Activated CD4-positive, alpha-beta memory T cell treated with anti-CD3 and anti-CD28 coated beads for 36 hours (primary cell): ENCODE measurements at regions of chr5 and their contacts with region 1.

Region 1: GRCh38 chr5:6827526-6828219 is 114.4 kb downstream of the TENT4A start:
- DNase-seq: peak; percentile 68
- H3K4me3 Mint-ChIP-seq: peak overlapping the region; percentile 50
- H3K27ac Mint-ChIP-seq: peak overlapping the region; percentile 55
- H3K4me1 Mint-ChIP-seq: peaks cover 52% of the 10 kb centered on the region
- H3K27me3 Mint-ChIP-seq: peaks cover 15% of the 10 kb centered on the region

Region 2: DNA sequence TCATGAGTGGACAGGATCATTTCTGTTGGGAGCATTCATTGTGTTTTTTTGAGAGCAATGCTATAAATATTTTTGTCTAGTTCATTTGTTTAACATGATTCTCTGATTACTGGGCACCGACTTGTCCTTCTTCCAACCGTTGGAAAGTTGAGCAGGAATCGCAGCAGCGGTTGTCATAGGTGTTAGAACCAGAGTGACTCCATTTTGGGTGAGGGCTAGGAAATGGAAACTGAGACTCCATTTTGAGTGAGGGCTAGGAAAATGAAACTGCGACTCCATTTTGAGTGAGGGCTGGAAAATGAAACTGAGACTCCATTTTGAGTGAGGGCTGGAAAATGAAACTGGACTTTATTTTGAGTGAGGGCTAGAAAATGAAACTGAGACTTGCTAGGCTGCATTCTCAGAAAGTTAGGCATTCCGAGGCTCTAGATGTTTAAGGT is 1304.6 kb before region 1 on chr5:
- CTCF ChIA-PET with region 1: no interaction called
- POLR2A ChIA-PET with region 1: no interaction called
- intact Hi-C with region 1: loop called (anchors 5 kb)
- DNase-seq: peak; percentile 25
- H3K4me3 Mint-ChIP-seq: no peak overlapping the region
- H3K27ac Mint-ChIP-seq: peak overlapping the region; percentile 46
- H3K4me1 Mint-ChIP-seq: peaks cover 23% of the 10 kb centered on the region
- H3K27me3 Mint-ChIP-seq: no peaks in the 10 kb centered on the region

Region 3: GRCh38 chr5:6480133-6481051 is 347.3 kb before region 1 on chr5:
- CTCF ChIA-PET with region 1: no interaction called
- POLR2A ChIA-PET with region 1: no interaction called
- intact Hi-C with region 1: loop called (anchors 5 kb)
- DNase-seq: no peak
- H3K4me3 Mint-ChIP-seq: no peak overlapping the region
- H3K27ac Mint-ChIP-seq: no peak overlapping the region
- H3K4me1 Mint-ChIP-seq: peaks cover 4% of the 10 kb centered on the region
- H3K27me3 Mint-ChIP-seq: peaks cover 17% of the 10 kb centered on the region

Region 4: GRCh38 chr5:6712577-6713275 is 114.9 kb before region 1 on chr5:
- CTCF ChIA-PET with region 1: no interaction called
- POLR2A ChIA-PET with region 1: no interaction called
- intact Hi-C with region 1: loop called (anchors 1 kb)
- DNase-seq: peak; percentile 98
- H3K4me3 Mint-ChIP-seq: peak overlapping the region; percentile 81
- H3K27ac Mint-ChIP-seq: peak overlapping the region; percentile 91
- H3K4me1 Mint-ChIP-seq: peaks cover 29% of the 10 kb centered on the region
- H3K27me3 Mint-ChIP-seq: no peaks in the 10 kb centered on the region

Region 5: DNA sequence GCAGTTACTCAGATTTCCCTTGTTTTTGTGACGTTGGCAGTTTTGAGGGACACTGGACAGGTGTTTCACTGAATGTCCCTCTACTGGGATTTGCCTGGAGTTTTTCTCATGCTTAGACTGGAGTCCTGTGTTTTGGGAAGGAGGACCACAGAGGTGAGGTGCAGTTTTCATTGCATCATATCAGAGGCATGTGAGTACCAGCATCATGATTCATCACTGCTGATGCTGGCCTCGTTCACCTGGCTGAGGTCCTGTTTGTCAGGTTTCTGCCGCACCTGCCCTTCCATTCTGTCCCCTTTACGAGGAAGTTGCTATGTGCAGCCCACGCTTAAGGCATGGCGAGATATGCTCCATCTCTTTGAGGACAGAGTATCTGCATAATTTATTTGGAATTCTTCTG is 47.7 kb after region 1 on chr5:
- CTCF ChIA-PET with region 1: no interaction called
- POLR2A ChIA-PET with region 1: no interaction called
- intact Hi-C with region 1: no loop called
- DNase-seq: no peak
- H3K4me3 Mint-ChIP-seq: no peak overlapping the region
- H3K27ac Mint-ChIP-seq: no peak overlapping the region
- H3K4me1 Mint-ChIP-seq: no peaks in the 10 kb centered on the region
- H3K27me3 Mint-ChIP-seq: peaks cover 5% of the 10 kb centered on the region

Region 6: GRCh38 chr5:6907320-6907918 is 79.7 kb after region 1 on chr5:
- CTCF ChIA-PET with region 1: no interaction called
- POLR2A ChIA-PET with region 1: no interaction called
- intact Hi-C with region 1: loop called (anchors 1 kb)
- DNase-seq: no peak
- H3K4me3 Mint-ChIP-seq: no peak overlapping the region
- H3K27ac Mint-ChIP-seq: no peak overlapping the region
- H3K4me1 Mint-ChIP-seq: peaks cover 6% of the 10 kb centered on the region
- H3K27me3 Mint-ChIP-seq: peaks cover 12% of the 10 kb centered on the region

Region 7: GRCh38 chr5:6937675-6938074 is 110.0 kb after region 1 on chr5:
- CTCF ChIA-PET with region 1: no interaction called
- POLR2A ChIA-PET with region 1: no interaction called
- intact Hi-C with region 1: no loop called
- DNase-seq: no peak
- H3K4me3 Mint-ChIP-seq: no peak overlapping the region
- H3K27ac Mint-ChIP-seq: no peak overlapping the region
- H3K4me1 Mint-ChIP-seq: no peaks in the 10 kb centered on the region
- H3K27me3 Mint-ChIP-seq: peaks cover 17% of the 10 kb centered on the region

Region 8: GRCh38 chr5:7868773-7869473 is 1041.2 kb after region 1 on chr5 and contains the starts of genes FASTKD3 and MTRR:
- CTCF ChIA-PET with region 1: interaction called, 3 read pairs
- POLR2A ChIA-PET with region 1: no interaction called
- intact Hi-C with region 1: loop called (anchors 1 kb)
- DNase-seq: peak; percentile 93
- H3K4me3 Mint-ChIP-seq: peak within 1 kb of the TSS; percentile 94
- H3K27ac Mint-ChIP-seq: peak within 1 kb of the TSS; percentile 80
- H3K4me1 Mint-ChIP-seq: peaks cover 72% of the 10 kb centered on the region
- H3K27me3 Mint-ChIP-seq: no peaks in the 10 kb centered on the region
- total RNA-seq, gene FASTKD3: 6.9 to 7.5 TPM
- total RNA-seq, gene MTRR: 45.2 to 47.1 TPM